ENCODE measurements at regions of chr2 and their contacts with region 1.

Region 1: DNA sequence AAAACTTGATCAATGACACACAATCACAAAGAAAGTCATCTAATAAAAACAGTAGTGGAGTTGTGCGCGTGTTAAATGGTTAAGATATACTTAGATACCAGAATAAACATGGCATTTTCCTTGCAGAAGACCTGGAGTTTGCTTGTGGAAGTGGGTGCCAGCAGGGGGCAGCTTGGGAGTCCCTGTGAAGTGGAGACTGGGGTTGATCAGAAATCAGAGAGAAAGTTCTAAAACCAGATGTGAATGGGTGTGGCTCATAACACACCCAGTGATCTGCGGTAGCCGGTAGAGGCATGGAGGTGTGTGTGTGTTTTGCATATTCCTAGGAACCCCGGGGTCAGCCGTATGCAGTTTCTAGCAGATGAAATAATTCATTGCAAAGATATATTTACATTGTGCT is 300.1 kb upstream of the TRIB2 start:
- DNase-seq: peak; percentile 54
- H3K4me3 Mint-ChIP-seq: no peak overlapping the region
- H3K27ac Mint-ChIP-seq: no peak overlapping the region
- H3K4me1 Mint-ChIP-seq: peaks cover 59% of the 10 kb centered on the region
- H3K27me3 Mint-ChIP-seq: no peaks in the 10 kb centered on the region

Region 2: DNA sequence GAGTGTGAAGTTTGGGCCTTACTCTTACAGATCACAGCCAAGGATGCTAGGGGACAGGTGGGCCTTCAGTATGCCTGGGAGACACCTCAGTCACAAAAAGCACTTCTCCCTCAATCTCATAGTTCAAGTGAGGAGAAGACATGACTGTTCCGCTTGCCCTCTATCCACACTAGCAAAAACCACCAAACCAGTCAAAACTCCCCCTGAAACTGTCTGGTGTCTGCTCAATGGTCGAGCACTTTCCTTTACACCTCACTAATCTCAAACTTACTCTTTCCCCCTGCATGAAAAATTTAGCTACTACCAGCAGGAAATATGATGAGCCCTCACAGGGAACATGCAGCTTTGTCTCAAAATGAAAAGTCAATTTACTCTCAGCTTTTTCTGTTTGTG is 532.4 kb after region 1 on chr2:
- intact Hi-C with region 1: loop called (anchors 10 kb)
- DNase-seq: no peak
- H3K4me3 Mint-ChIP-seq: no peak overlapping the region
- H3K27ac Mint-ChIP-seq: no peak overlapping the region
- H3K4me1 Mint-ChIP-seq: peaks cover 35% of the 10 kb centered on the region
- H3K27me3 Mint-ChIP-seq: peaks cover 51% of the 10 kb centered on the region